Esophagus squamous epithelium (tissue), 5 donors: ENCODE measurements at regions of chr12 and their contacts with region 1.

Region 1: DNA sequence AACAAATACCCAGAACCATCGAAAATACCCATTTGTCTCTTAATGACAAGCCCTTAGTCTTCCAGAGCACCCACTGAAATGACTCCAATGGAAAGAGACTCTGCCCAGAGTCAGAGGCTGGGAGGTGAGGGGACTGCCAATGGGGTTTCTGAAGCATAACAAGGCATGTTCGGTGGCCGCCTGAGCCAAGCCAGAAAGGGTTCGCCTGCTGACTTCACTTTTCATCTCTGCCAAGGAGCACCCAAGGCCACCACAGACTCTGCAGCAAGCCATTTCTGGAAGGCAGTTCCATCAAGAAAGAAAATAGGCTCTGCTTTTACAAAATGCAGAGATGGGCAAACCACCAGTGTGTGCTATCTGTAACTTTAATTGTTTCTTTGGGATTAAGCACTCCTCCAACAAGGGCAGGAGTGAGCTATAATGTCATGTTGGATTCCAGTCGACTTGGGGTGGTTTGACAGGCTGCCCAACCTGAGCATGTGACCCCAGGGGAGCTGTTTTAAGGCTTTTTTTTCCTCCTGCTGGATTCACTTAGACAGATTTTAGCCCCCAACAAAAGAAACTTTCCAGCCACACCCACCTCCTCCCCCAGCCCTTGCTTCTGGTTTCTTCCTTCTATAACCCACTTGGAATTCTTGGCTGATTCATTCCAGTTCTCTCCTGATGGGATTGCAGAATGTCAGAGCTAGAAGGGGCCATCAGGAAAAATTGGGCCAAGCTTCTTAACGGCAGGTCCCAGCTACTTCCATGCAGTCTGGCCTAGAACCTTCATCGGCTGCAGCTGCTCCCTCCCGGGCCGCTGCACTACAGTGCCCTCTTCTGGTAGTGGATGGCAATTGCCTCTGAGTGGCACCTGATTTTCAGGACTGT is 24.1 kb downstream of the CKAP4 start:
- DNase-seq: no peak
- H3K4me3 ChIP-seq: no peak overlapping the region
- H3K27ac ChIP-seq: no peak overlapping the region
- H3K4me1 ChIP-seq: peaks cover 11 to 20% (median 11%) of the 10 kb centered on the region in 3 donors
- H3K27me3 ChIP-seq: peaks cover 0 to under 1% (median 0%) of the 10 kb centered on the region in 4 donors
- CTCF ChIP-seq: peak; percentile 86 to 95 (median 92)
- POLR2A ChIP-seq: no peak

Region 2: DNA sequence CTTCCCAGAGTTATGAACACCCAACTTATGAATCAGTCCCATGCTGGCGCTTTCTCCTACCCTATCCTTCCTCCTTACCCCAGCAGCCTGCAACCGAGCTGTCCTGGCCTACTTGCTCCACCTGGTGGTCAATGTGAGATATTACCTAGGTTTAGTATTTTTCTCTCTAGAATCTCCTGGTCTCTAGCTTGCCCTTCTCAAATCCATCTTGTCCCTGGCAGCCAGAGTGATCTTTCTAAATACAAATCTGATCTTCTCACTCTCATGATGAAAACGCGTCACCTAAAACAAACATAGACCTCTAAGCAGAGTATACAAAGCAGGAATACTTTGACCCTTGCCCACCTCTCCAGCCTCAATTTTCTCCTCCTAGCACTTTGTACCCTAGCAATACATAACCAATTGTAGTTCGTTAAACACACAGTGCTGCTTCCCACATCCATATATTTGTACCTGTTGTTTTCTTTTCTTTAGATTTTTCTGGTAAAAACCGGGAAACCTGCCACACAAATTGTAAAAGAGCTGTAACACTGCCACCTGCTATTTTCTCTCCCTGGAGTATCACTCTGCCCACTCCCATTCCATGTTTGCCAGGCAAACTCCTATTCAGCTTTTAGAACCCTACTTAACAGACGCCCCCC is 58.9 kb after region 1 on chr12:
- intact Hi-C with region 1: loop called (anchors 2 kb)
- DNase-seq: no peak
- H3K4me3 ChIP-seq: no peak overlapping the region
- H3K27ac ChIP-seq: no peak overlapping the region
- H3K4me1 ChIP-seq: peaks cover 0 to 29% (median 4%) of the 10 kb centered on the region in 3 donors
- H3K27me3 ChIP-seq: no peaks in the 10 kb centered on the region
- CTCF ChIP-seq: peak; percentile 60 to 90 (median 82)
- POLR2A ChIP-seq: no peak

Region 3: GRCh38 chr12:106345739-106346138 is 122.0 kb after region 1 on chr12:
- intact Hi-C with region 1: loop called (anchors 10 kb)
- DNase-seq: no peak
- H3K4me3 ChIP-seq: no peak overlapping the region
- H3K27ac ChIP-seq: no peak overlapping the region
- H3K4me1 ChIP-seq: peaks cover 9 to 40% (median 12%) of the 10 kb centered on the region in 3 donors
- H3K27me3 ChIP-seq: no peaks in the 10 kb centered on the region
- CTCF ChIP-seq: peak in 4 of 6 experiments; percentile 20 to 55 (median 39)
- POLR2A ChIP-seq: no peak